Left ventricle myocardium inferior (tissue), 1 donor: ENCODE measurements at regions of chr15 and their contacts with region 1.

Region 1: GRCh38 chr15:60585743-60586708 is 107.1 kb upstream of the ICE2 start:
- DNase-seq: no peak
- H3K4me3 ChIP-seq: no peak overlapping the region
- H3K27ac ChIP-seq: no peak overlapping the region
- H3K4me1 ChIP-seq: peaks cover 66% of the 10 kb centered on the region
- H3K27me3 ChIP-seq: no peaks in the 10 kb centered on the region
- CTCF ChIP-seq: peak; percentile 94

Region 2: GRCh38 chr15:60760646-60761504 is 174.8 kb after region 1 on chr15:
- intact Hi-C with region 1: loop called (anchors 10 kb)
- DNase-seq: no peak
- H3K4me3 ChIP-seq: no peak overlapping the region
- H3K27ac ChIP-seq: no peak overlapping the region
- H3K4me1 ChIP-seq: peaks cover 12% of the 10 kb centered on the region
- H3K27me3 ChIP-seq: no peaks in the 10 kb centered on the region
- CTCF ChIP-seq: no peak

Region 3: DNA sequence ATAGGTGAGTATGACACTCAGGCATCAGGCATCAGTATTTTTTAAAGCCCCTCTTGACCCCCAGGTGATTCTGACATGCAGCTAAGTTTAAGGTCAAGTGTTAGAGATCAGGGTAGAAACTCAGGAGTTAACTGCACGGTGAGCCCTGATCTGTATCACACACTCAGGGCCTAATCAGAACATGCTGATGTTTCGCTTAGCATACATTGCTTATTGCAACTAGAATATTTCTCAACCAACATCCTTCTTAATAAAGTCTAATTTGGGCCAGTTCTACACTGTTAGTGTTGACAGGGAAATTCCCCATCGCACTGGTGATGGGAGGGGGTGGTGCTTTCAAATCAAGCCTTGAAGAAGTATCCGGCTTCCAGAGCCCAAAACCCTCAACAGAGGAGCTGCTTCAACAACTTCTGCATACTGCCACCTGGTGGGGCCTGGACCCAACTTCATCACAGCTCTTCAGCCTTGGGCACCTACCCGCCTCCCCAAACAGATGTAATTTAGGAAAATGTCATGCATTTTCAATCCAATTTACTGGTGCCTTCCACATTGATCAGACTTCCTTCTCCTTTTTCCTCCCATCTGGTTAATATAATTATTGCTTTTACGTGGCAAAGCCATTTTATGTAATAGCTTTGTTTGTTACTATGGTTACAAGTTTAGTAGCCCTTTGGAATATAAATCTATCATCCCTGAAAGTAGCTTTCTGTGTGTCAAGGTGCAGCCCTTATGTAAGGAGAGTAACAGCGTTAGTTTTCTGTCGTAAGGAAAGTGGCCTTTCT is 330.8 kb after region 1 on chr15:
- intact Hi-C with region 1: loop called (anchors 5 kb)
- DNase-seq: peak; percentile 88
- H3K4me3 ChIP-seq: peak overlapping the region; percentile 19
- H3K27ac ChIP-seq: peak overlapping the region; percentile 70
- H3K4me1 ChIP-seq: peaks cover 35% of the 10 kb centered on the region
- H3K27me3 ChIP-seq: no peaks in the 10 kb centered on the region
- CTCF ChIP-seq: peak; percentile 91

Region 4: DNA sequence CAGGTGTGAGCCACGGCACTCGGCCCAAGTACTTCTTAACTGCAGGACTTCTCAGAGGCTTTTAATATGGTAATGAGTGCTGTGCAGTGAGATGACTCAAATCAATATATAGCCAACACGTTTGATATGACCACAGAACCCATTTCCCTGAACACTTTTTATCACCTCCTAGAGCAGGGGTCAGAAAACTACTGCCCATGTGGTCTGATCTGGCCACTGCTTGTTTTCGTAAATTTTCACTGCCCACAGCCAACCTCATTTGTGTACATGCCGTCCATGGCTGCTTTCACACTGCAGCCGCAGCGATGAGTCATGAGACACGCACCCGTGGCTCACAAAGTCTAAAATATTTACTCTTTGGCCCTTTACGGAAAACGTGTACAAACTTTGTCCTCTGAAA is 463.9 kb after region 1 on chr15:
- intact Hi-C with region 1: loop called (anchors 10 kb)
- DNase-seq: no peak
- H3K4me3 ChIP-seq: no peak overlapping the region
- H3K27ac ChIP-seq: no peak overlapping the region
- H3K4me1 ChIP-seq: peaks cover 13% of the 10 kb centered on the region
- H3K27me3 ChIP-seq: no peaks in the 10 kb centered on the region
- CTCF ChIP-seq: no peak